ENCODE measurements at regions of chr7 and their contacts with region 1.

Region 1: GRCh38 chr7:6160191-6160623 is 112.2 kb downstream of the CYTH3 start:
- DNase-seq: peak; percentile 66
- H3K4me3 ChIP-seq: no peak overlapping the region
- H3K27ac ChIP-seq: no peak overlapping the region
- H3K4me1 ChIP-seq: no peaks in the 10 kb centered on the region
- H3K27me3 ChIP-seq: no peaks in the 10 kb centered on the region
- CTCF ChIP-seq: peak; percentile 65 to 83
- POLR2A ChIP-seq: no peak

Region 2: DNA sequence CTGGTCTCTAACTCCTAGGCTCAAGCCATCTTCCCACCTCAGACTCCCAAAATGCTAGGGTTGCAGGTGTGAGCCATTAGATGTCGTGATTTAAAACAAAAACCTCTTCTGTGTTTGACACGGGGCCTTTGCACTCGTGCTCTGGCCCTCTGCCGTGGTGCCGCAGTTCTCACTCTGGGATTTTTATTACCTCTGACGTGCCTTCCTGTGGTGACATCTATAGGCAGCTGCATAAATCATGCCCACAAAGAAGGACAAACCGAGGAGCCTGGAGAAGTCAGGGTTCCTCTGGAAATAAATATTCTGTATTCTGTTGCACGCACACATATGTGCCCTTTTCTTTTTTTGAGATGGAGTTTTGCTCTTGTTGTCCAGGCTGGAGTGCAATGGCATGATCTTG is 305.5 kb before region 1 on chr7:
- CTCF ChIA-PET with region 1: interaction called, 18 read pairs
- POLR2A ChIA-PET with region 1: no interaction called
- dilution Hi-C with region 1: no loop called
- intact Hi-C with region 1: no loop called
- DNase-seq: no peak
- H3K4me3 ChIP-seq: no peak overlapping the region
- H3K27ac ChIP-seq: no peak overlapping the region
- H3K4me1 ChIP-seq: no peaks in the 10 kb centered on the region
- H3K27me3 ChIP-seq: no peaks in the 10 kb centered on the region
- CTCF ChIP-seq: no peak
- POLR2A ChIP-seq: no peak

Region 3: GRCh38 chr7:6015917-6016652 is 144.1 kb before region 1 on chr7:
- CTCF ChIA-PET with region 1: no interaction called
- POLR2A ChIA-PET with region 1: no interaction called
- dilution Hi-C with region 1: no loop called
- intact Hi-C with region 1: no loop called
- DNase-seq: no peak
- H3K4me3 ChIP-seq: no peak overlapping the region
- H3K27ac ChIP-seq: no peak overlapping the region
- H3K4me1 ChIP-seq: no peaks in the 10 kb centered on the region
- H3K27me3 ChIP-seq: no peaks in the 10 kb centered on the region
- CTCF ChIP-seq: no peak
- POLR2A ChIP-seq: no peak

Region 4: DNA sequence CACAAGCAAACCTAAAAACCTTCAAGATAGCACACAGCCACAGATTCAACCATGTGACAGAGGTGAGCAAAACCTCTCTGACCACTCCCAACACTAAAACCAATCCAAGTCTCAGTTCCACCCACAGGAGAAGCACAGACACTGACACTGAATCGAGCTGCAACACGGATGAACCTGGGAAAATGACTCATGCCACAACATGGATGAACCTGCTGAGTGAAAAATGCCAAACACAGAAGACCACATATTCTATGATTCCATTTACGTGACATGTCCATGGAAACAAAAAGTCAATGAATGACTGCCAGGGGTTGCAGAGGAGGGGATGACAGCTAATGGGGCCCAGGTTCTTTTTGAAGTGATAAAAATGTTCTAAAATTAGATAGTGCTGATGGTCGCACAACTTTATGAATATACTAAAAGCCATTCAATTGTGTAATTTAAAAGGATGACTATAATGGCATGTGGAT is 90.2 kb after region 1 on chr7:
- CTCF ChIA-PET with region 1: interaction called, 9 read pairs
- POLR2A ChIA-PET with region 1: no interaction called
- dilution Hi-C with region 1: no loop called
- intact Hi-C with region 1: loop called (anchors 2 kb)
- DNase-seq: no peak
- H3K4me3 ChIP-seq: no peak overlapping the region
- H3K27ac ChIP-seq: no peak overlapping the region
- H3K4me1 ChIP-seq: peaks cover 18% of the 10 kb centered on the region
- H3K27me3 ChIP-seq: no peaks in the 10 kb centered on the region
- CTCF ChIP-seq: no peak
- POLR2A ChIP-seq: no peak

Region 5: DNA sequence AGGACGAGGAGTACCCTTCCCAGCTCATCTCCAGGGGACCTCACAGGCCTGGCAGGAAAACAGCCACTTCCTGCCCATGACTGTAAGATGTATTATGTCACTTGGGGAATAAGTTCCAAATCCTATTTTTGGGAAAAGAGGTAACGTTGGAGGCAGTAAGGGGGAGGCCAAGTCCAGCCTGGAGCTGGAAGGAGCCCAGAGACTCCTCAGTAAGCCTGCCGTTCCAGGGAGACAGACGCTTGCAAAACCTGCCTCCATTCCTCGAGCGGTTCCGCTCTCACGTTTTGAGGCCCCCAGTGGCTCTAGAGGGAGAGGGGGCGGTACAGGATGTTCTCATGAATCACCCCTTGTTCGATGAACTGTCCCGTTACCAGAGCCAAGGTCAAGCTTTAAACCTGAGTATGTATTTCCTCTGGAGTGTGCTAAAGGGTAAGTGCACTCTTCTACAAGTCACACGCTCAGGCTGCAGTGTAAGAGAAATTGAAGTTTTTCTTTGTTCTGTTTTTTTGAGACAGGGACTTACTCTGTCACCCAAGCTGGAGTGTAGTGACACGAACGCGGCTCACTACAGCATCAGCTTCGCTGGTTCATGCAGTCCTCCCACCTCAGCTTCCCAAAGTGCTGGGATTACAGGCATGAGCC is 157.7 kb after region 1 on chr7:
- CTCF ChIA-PET with region 1: interaction called, 240 read pairs
- POLR2A ChIA-PET with region 1: no interaction called
- dilution Hi-C with region 1: no loop called
- intact Hi-C with region 1: loop called (anchors 1 kb)
- DNase-seq: peak; percentile 47
- H3K4me3 ChIP-seq: no peak overlapping the region
- H3K27ac ChIP-seq: peak overlapping the region; percentile 15
- H3K4me1 ChIP-seq: peaks cover 9% of the 10 kb centered on the region
- H3K27me3 ChIP-seq: no peaks in the 10 kb centered on the region
- CTCF ChIP-seq: no peak
- POLR2A ChIP-seq: no peak

Region 6: GRCh38 chr7:6350433-6351058 is 190.3 kb after region 1 on chr7:
- CTCF ChIA-PET with region 1: interaction called, 10 read pairs
- POLR2A ChIA-PET with region 1: interaction called, 6 read pairs
- dilution Hi-C with region 1: no loop called
- intact Hi-C with region 1: no loop called
- DNase-seq: no peak
- H3K4me3 ChIP-seq: no peak overlapping the region
- H3K27ac ChIP-seq: no peak overlapping the region
- H3K4me1 ChIP-seq: no peaks in the 10 kb centered on the region
- H3K27me3 ChIP-seq: no peaks in the 10 kb centered on the region
- CTCF ChIP-seq: no peak
- POLR2A ChIP-seq: no peak

Measured in endothelial cell of umbilical vein (primary cell).